ENCODE measurements at regions of chr1 and their contacts with region 1.

Region 1: GRCh38 chr1:239976130-239976968 is 115.3 kb upstream of the FMN2 start:
- DNase-seq: peak in 1 of 2 experiments; percentile 66
- H3K4me3 ChIP-seq: no peak overlapping the region
- H3K27ac ChIP-seq: no peak overlapping the region
- H3K4me1 ChIP-seq: no peaks in the 10 kb centered on the region
- H3K27me3 ChIP-seq: peaks cover 0 to 1% (median 0%) of the 10 kb centered on the region in 4 experiments; a peak in 1 of 7 replicates
- CTCF ChIP-seq: peak; percentile 68 to 86 (median 79)
- EP300 ChIP-seq: no peak
- POLR2A ChIP-seq: no peak
- RAD21 ChIP-seq: peak; percentile 89 to 91

Region 2: DNA sequence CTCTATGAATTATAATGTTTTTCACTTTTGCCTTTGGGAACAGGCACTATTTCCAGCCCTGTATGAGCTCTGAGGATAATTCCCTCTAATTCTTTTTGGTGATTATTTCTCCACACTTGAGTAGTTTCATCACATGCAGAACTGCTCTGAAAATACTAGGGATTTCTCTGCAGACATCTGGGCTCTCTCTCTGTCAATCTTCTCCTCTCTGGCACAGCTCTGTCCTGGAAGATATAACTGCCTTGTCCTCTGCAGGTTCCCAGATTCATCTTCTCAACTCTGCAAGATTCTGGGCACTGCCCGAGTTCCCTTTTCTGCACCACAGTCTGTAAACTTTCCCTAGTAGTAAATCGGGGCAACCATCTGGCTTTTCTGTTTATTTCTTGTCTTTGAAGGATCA is 16.0 kb before region 1 on chr1:
- CTCF ChIA-PET with region 1: interaction called, 131 read pairs
- POLR2A ChIA-PET with region 1: no interaction called
- DNase-seq: no peak
- H3K4me3 ChIP-seq: no peak overlapping the region
- H3K27ac ChIP-seq: no peak overlapping the region
- H3K4me1 ChIP-seq: no peaks in the 10 kb centered on the region
- H3K27me3 ChIP-seq: no peaks in the 10 kb centered on the region
- CTCF ChIP-seq: no peak
- EP300 ChIP-seq: no peak
- POLR2A ChIP-seq: no peak
- RAD21 ChIP-seq: no peak

Region 3: GRCh38 chr1:239987103-239987745 is 10.9 kb after region 1 on chr1:
- CTCF ChIA-PET with region 1: interaction called, 20 read pairs
- POLR2A ChIA-PET with region 1: no interaction called
- DNase-seq: no peak
- H3K4me3 ChIP-seq: no peak overlapping the region
- H3K27ac ChIP-seq: no peak overlapping the region
- H3K4me1 ChIP-seq: no peaks in the 10 kb centered on the region
- H3K27me3 ChIP-seq: no peaks in the 10 kb centered on the region
- CTCF ChIP-seq: peak in 2 of 3 experiments; percentile 42 to 51; a peak in 3 of 4 replicates
- EP300 ChIP-seq: no peak
- POLR2A ChIP-seq: no peak
- RAD21 ChIP-seq: peak; percentile 69 to 71

Region 4: DNA sequence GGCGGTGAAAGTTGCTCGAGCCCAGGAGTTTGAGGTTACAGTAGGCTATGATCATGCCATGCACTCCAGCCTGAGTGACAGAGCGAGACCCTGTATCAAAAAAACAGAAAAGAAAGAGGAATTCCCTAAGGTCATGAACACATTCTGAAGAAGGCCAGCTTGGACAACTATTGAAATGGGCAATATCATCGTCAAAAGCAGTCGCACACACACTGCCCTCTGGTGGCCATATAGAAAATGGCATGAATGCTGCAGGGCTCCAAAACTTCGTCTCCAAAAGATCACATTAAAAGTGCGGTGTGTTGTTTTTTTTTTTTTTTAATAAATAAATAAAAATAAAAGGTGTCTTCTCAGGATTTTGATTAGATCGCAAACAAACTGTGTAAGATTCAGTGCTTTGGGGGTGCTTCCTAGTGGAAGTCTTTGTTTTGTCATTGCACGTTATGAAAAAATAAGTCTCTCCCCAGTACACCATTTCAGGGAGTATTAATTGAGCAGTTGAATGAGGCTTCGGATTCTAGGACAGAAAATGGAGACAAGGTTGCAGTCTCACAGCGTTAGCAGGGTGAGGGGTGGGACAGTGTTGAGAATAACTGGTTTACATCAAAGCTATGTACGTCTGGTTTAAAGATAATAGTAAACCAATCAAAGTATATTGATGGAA is 27.9 kb after region 1 on chr1:
- CTCF ChIA-PET with region 1: interaction called, 11 read pairs
- POLR2A ChIA-PET with region 1: no interaction called
- DNase-seq: peak in 1 of 2 experiments; percentile 58
- H3K4me3 ChIP-seq: no peak overlapping the region
- H3K27ac ChIP-seq: no peak overlapping the region
- H3K4me1 ChIP-seq: no peaks in the 10 kb centered on the region
- H3K27me3 ChIP-seq: no peaks in the 10 kb centered on the region
- CTCF ChIP-seq: peak; percentile 57 to 75 (median 67)
- EP300 ChIP-seq: no peak
- POLR2A ChIP-seq: no peak
- RAD21 ChIP-seq: peak; percentile 27 to 37

Measured in H1 (cell line).